ENCODE measurements at regions of chr9 and their contacts with region 1.

Region 1: DNA sequence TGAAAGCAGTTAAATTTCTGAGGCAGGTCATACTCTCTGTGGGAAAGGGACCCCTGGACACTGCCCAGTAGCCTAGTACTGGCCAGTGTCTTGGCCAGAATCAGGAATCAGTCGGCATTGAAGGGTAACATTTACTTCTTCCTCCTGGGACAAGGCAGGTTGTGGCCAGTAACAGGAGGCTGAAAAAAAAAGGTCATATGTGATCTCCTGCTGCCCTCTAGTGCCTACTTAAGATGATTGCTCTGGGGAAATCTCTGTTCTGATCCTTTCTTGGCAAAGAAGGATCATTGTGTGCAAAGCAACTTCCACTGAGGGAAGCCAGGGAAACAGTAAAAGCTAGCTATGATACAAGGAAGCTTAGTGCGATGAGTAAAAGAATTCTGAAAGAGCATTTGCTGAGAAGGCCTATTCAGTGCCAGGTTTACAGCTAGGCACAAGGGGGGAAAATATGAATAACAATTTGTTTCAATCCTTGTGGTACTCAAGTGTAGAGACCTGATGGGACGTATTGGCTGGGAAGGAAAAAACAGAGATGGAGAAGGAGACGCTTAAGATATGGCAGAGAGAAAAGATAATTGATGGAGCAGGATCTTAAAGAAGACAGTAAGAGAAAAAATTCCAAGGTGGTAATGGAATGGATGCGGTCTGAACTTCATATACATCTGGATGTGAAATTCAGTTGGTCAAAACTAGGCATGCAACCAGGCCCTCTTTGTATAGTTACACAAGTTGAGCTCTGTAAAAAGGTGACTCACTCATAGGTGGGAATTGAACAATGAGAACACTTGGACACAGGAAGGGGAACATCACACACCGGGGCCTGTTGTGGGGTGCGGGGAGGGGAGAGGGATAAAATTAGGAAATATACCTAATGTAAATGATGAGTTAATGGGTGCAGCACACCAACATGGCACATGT is 25.8 kb upstream of the TRIM32 start:
- DNase-seq: peak; percentile 35 to 60
- H3K4me3 ChIP-seq: no peak overlapping the region
- H3K27ac ChIP-seq: no peak overlapping the region
- H3K4me1 ChIP-seq: no peaks in the 10 kb centered on the region
- H3K27me3 ChIP-seq: no peaks in the 10 kb centered on the region
- CTCF ChIP-seq: peak; percentile 84

Region 2: GRCh38 chr9:114662081-114662989 is 1999.0 kb before region 1 on chr9:
- CTCF ChIA-PET with region 1: no interaction called
- POLR2A ChIA-PET with region 1: no interaction called
- intact Hi-C with region 1: loop called (anchors 10 kb)
- DNase-seq: peak in 1 of 2 experiments; percentile 58
- H3K4me3 ChIP-seq: no peak overlapping the region
- H3K27ac ChIP-seq: no peak overlapping the region
- H3K4me1 ChIP-seq: no peaks in the 10 kb centered on the region
- H3K27me3 ChIP-seq: no peaks in the 10 kb centered on the region
- CTCF ChIP-seq: peak; percentile 96

Region 3: DNA sequence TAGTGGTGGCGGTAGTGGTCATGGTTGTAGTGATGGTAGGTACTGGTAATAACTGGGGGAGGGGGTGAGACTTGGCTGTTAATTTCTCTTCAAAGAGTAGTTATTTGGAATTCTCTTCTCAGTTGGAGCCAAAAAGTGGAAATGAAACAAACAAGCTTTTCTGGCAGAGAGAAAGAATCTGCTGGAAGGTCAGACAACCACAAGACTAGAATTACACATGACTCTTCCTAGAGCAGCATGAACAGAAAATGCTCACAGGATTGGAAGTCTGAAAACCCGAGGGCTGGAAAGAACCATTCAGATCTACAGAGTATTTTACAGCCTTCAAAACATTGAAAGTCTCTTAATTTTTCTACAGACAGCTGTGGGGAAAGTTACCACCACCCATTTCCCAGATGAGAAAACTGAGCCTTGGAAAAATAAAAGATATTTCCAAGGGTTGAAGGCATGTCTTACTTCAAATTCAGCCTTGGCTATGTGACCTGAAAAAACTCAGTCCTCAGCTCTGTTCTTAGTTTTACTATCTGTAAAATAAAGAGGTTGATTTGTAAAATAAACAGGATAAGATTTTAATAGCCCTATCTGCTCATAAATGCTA is 17.1 kb before region 1 on chr9:
- CTCF ChIA-PET with region 1: no interaction called
- POLR2A ChIA-PET with region 1: no interaction called
- intact Hi-C with region 1: no loop called
- DNase-seq: no peak
- H3K4me3 ChIP-seq: no peak overlapping the region
- H3K27ac ChIP-seq: no peak overlapping the region
- H3K4me1 ChIP-seq: no peaks in the 10 kb centered on the region
- H3K27me3 ChIP-seq: no peaks in the 10 kb centered on the region
- CTCF ChIP-seq: no peak